Aorta (tissue), 5 donors: ENCODE measurements at regions of chr7 and their contacts with region 1.

Region 1: GRCh38 chr7:14717816-14718215 is 184.7 kb downstream of the DGKB start:
- DNase-seq: no peak
- ATAC-seq: no peak
- H3K4me3 ChIP-seq: no peak overlapping the region
- H3K27ac ChIP-seq: no peak overlapping the region
- H3K4me1 ChIP-seq: no peaks in the 10 kb centered on the region
- H3K27me3 ChIP-seq: no peaks in the 10 kb centered on the region

Region 2: DNA sequence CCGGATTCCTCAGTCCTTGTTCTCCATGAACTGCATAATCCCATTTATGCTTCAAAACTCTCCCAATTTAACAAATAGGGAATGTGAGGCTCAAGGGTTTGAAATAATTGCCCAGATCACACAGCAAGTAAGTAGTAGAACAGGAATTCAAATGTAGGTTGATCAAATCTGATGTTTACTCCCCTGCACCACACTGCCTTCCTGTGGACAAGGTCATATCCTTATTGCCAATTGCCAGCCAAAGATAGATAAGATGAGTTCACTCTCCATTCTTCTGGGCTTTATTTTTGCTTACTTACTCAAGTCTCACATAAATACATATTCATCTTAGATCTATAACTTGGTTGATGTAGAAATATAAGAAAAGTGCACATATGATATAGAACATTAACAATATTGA is 293.1 kb before region 1 on chr7:
- intact Hi-C with region 1: no loop called
- DNase-seq: no peak
- ATAC-seq: no peak
- H3K4me3 ChIP-seq: no peak overlapping the region
- H3K27ac ChIP-seq: no peak overlapping the region
- H3K4me1 ChIP-seq: no peaks in the 10 kb centered on the region
- H3K27me3 ChIP-seq: no peaks in the 10 kb centered on the region

Region 3: GRCh38 chr7:14507617-14508016 is 210.2 kb before region 1 on chr7:
- intact Hi-C with region 1: no loop called
- DNase-seq: no peak
- ATAC-seq: no peak
- H3K4me3 ChIP-seq: no peak overlapping the region
- H3K27ac ChIP-seq: no peak overlapping the region
- H3K4me1 ChIP-seq: no peaks in the 10 kb centered on the region
- H3K27me3 ChIP-seq: no peaks in the 10 kb centered on the region

Region 4: DNA sequence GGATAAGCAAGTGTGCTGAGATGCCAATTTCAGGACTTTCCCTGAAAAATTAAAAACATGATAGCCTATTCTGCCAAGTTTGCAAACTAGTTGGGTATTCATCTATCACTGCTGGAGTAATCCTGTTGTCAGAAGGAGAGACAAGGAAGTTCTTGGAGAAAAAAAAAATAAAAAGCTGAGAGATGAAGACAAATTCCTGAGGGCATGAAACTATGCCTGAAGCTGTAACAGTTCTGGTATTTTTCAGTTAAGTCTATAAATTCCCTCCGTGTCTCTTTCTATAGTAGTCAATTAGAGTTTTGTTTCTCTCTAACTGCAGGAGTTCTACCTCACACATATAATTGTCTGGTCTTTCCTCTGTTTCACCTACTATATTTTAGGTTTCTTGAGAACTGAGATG is 89.1 kb after region 1 on chr7:
- intact Hi-C with region 1: no loop called
- DNase-seq: no peak
- ATAC-seq: no peak
- H3K4me3 ChIP-seq: no peak overlapping the region
- H3K27ac ChIP-seq: no peak overlapping the region
- H3K4me1 ChIP-seq: no peaks in the 10 kb centered on the region
- H3K27me3 ChIP-seq: no peaks in the 10 kb centered on the region

Region 5: GRCh38 chr7:14902589-14903067 is 184.8 kb after region 1 on chr7 and contains the start of gene DGKB:
- intact Hi-C with region 1: no loop called
- DNase-seq: peak in 1 of 2 donors; percentile 51
- ATAC-seq: peak; percentile 71
- H3K4me3 ChIP-seq: no peak within 1 kb of the TSS
- H3K27ac ChIP-seq: no peak within 1 kb of the TSS
- H3K4me1 ChIP-seq: no peaks in the 10 kb centered on the region
- H3K27me3 ChIP-seq: no peaks in the 10 kb centered on the region
- total RNA-seq, gene DGKB: 0.96 to 1.1 TPM

Region 6: DNA sequence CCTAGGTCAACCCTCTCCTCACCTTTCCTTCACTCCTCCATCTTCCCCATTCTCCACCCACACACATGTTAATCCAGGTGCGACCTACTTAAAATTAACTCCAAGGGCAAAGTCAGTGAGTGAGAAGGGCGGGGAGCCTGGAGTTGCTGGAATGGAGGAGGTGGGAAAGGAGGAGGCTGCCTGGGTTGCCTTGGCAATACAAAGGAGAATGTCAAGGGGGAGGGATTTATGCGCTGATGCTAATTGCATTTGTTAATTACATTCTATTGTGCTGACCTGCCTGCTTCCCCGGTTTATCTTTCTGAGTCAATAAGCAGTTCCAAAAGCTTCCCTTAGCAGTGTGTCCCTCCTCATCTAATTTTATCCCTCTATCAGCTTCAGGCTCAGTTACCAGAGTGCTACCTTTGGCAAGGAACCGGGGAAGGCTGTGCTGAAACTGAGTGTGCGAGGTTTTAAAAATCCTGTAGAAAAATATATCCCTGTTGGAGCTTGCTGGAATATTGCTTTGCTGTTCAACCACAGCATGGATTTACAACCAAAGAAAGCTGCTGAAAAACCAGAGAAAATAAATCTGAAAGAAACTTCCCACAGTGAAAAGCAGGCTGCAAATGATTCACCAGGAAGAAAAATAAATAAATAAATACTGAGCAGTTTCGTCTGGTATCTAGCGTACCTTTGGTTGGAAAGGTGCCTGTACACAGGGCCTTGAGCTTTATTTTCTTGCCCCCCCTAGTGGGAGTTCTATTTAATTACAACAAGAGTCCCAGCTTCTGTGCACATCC is 297.9 kb after region 1 on chr7:
- intact Hi-C with region 1: loop called (anchors 5 to 10 kb)
- DNase-seq: no peak
- ATAC-seq: peak; percentile 73
- H3K4me3 ChIP-seq: peak overlapping the region in 1 of 2 donors; percentile 14
- H3K27ac ChIP-seq: no peak overlapping the region
- H3K4me1 ChIP-seq: no peaks in the 10 kb centered on the region
- H3K27me3 ChIP-seq: no peaks in the 10 kb centered on the region